CD4-positive, alpha-beta T cell (primary cell): ENCODE measurements at regions of chr19 and their contacts with region 1.

Region 1: DNA sequence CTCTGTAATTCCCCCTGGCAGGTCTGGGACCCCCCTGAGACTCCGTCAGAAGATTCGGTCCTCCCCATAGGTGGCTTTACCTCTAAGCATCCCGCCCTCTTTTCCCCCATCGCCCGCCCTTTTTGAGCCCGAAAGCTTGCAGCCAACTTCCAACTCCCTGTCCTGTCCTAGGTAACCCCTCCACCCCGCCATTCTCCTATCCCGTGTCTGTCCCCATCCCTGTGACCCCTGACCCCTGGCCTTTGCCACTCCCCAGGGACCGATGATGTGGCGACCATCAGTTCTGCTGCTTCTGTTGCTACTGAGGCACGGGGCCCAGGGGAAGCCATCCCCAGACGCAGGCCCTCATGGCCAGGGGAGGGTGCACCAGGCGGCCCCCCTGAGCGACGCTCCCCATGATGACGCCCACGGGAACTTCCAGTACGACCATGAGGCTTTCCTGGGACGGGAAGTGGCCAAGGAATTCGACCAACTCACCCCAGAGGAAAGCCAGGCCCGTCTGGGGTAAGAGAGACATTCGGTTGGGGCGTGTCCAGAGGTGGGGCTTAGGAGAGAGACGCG is 488 bp downstream of the RCN3 start:
- DNase-seq: peak in 1 of 14 experiments; percentile 13
- ATAC-seq: no peak
- H3K4me3 ChIP-seq: peak overlapping the region; percentile 54
- H3K4me3 Mint-ChIP-seq: peak overlapping the region; percentile 84
- H3K27ac ChIP-seq: no peak overlapping the region
- H3K27ac Mint-ChIP-seq: no peak overlapping the region
- H3K4me1 ChIP-seq: peaks cover 20% of the 10 kb centered on the region
- H3K4me1 Mint-ChIP-seq: peaks cover 32% of the 10 kb centered on the region
- H3K27me3 ChIP-seq: no peaks in the 10 kb centered on the region
- H3K27me3 Mint-ChIP-seq: no peaks in the 10 kb centered on the region
- CTCF ChIP-seq: no peak

Region 2: DNA sequence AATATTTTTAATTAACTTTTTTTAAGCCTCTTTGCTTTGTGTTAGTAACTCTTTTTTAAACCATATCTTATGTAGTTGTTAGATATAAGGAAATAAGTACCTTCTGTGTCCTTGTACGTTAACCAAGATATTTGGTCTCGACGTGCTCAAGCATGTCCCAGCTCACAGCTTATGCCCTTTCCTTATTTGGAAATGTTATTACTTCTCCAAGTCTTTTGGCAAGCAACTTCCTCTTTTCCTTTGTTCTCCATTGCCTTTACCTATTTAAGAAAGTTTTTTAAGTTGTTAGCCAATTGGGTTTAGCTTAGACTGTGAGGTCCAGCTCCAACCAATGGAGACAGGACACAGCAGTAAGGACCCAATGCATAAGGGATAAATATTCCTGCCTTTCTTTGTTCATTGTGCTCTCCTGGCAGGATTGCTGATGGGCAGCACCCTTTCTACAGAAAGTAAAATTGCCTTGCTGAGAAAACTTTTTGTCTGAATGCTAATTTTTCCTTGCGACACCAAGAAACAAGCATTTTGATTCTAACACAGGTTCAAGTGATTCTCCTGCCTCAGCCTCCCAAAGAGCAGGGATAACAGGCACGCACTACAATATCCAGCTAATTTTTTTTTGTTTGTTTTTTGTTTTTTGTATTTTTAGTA is 159.5 kb before region 1 on chr19:
- CTCF ChIA-PET with region 1: no interaction called
- POLR2A ChIA-PET with region 1: no interaction called
- intact Hi-C with region 1: no loop called
- DNase-seq: no peak
- ATAC-seq: no peak
- H3K4me3 ChIP-seq: no peak overlapping the region
- H3K4me3 Mint-ChIP-seq: no peak overlapping the region
- H3K27ac ChIP-seq: no peak overlapping the region
- H3K27ac Mint-ChIP-seq: no peak overlapping the region
- H3K4me1 ChIP-seq: peaks cover 8% of the 10 kb centered on the region
- H3K4me1 Mint-ChIP-seq: no peaks in the 10 kb centered on the region
- H3K27me3 ChIP-seq: peaks cover 20 to 31% of the 10 kb centered on the region in 2 experiments
- H3K27me3 Mint-ChIP-seq: peaks cover 22% of the 10 kb centered on the region
- CTCF ChIP-seq: no peak

Region 3: DNA sequence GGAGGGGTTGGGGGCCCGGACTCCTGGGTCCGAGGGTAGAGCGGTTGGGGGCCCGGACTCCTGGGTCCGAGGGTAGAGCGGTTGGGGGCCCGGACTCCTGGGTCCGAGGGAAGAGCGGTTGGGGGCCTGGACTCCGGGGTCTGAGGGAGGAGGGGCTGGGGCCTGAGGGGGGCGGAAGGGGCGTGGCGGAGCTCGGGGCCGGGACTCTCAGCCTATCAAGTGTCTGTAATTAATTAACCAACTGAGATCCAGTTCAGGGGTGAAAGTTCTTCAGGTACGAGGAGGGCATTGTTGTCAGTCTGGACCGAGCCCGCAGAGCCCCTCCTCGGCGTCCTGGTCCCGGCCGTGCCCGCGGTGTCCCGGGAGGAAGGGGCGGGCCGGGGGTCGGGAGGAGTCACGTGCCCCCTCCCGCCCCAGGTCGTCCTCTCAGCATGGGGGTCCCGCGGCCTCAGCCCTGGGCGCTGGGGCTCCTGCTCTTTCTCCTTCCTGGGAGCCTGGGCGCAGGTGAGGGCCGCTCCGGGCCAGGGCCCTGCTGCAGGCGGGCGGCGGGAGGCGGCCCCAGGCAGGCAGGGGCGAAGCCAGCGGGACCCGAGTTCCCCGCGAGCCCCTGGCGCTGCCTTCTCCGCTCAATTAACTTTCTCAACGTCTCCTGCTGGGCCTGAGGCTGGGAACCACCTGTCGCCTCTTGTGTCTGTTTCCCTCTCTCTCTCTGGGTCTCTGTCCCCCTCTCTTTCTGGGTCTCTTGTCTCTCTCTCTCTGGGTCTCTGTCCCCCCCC is 15.1 kb before region 1 on chr19:
- CTCF ChIA-PET with region 1: no interaction called
- POLR2A ChIA-PET with region 1: interaction called, 8 read pairs
- intact Hi-C with region 1: loop called in 1 of 2 experiments (anchors 2 kb)
- DNase-seq: peak in 5 of 14 experiments; percentile 27 to 63 (median 56)
- ATAC-seq: peak; percentile 68
- H3K4me3 ChIP-seq: peak overlapping the region; percentile 60
- H3K4me3 Mint-ChIP-seq: peak overlapping the region; percentile 90
- H3K27ac ChIP-seq: peak overlapping the region; percentile 46 to 62
- H3K27ac Mint-ChIP-seq: peak overlapping the region; percentile 82
- H3K4me1 ChIP-seq: peaks cover 44% of the 10 kb centered on the region
- H3K4me1 Mint-ChIP-seq: peaks cover 46% of the 10 kb centered on the region
- H3K27me3 ChIP-seq: no peaks in the 10 kb centered on the region
- H3K27me3 Mint-ChIP-seq: no peaks in the 10 kb centered on the region
- CTCF ChIP-seq: no peak

Region 4: DNA sequence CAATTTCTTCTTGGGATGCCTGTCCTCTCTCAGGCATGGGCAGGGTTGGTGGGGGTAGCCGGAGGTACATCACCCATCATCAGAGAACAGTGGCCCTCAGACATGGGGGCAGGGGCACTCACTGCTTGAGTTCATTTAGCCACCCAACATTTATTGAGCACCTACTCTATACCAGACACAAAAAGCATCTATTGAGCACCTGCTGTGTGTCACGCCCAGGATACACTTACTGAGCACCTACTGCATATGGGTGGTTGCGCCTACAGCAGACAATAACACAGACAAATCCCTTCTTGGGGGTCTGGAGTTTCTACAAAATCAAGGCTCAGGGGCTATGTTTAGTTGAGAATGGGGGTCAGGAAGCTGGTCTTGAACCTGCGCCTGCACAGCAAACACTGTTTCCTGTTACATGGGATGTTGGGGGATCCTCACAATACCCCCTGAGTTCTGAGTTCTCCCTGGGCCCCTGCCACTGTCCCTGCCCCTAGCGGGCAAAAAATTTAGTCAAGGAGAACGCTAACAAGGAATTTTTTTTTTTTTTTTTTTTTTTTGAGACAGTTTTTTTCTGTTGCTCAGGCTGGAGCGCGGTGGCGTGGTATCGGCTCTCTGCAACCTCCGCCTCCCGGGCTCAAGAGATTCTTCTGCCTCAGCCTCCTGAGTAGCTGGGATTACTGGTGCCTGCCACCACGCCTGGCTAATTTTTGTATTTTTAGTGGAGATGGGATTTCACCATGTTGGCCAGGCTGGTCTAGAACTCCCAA is 11.1 kb after region 1 on chr19:
- CTCF ChIA-PET with region 1: no interaction called
- POLR2A ChIA-PET with region 1: no interaction called
- intact Hi-C with region 1: loop called in 1 of 2 experiments (anchors 2 kb)
- DNase-seq: no peak
- ATAC-seq: no peak
- H3K4me3 ChIP-seq: no peak overlapping the region
- H3K4me3 Mint-ChIP-seq: no peak overlapping the region
- H3K27ac ChIP-seq: no peak overlapping the region
- H3K27ac Mint-ChIP-seq: no peak overlapping the region
- H3K4me1 ChIP-seq: peaks cover 24% of the 10 kb centered on the region
- H3K4me1 Mint-ChIP-seq: peaks cover 26% of the 10 kb centered on the region
- H3K27me3 ChIP-seq: no peaks in the 10 kb centered on the region
- H3K27me3 Mint-ChIP-seq: no peaks in the 10 kb centered on the region
- CTCF ChIP-seq: no peak

Region 5: GRCh38 chr19:49555600-49556411 is 27.5 kb after region 1 on chr19:
- CTCF ChIA-PET with region 1: interaction called, 5 read pairs
- POLR2A ChIA-PET with region 1: interaction called, 19 read pairs
- intact Hi-C with region 1: no loop called
- DNase-seq: peak; percentile 65 to 94 (median 84)
- ATAC-seq: peak; percentile 64
- H3K4me3 ChIP-seq: peak overlapping the region; percentile 68
- H3K4me3 Mint-ChIP-seq: peak overlapping the region; percentile 62
- H3K27ac ChIP-seq: peak overlapping the region; percentile 61 to 62
- H3K27ac Mint-ChIP-seq: peak overlapping the region; percentile 96
- H3K4me1 ChIP-seq: peaks cover 96% of the 10 kb centered on the region
- H3K4me1 Mint-ChIP-seq: peaks cover 74% of the 10 kb centered on the region
- H3K27me3 ChIP-seq: peaks cover 0 to 3% of the 10 kb centered on the region in 2 experiments
- H3K27me3 Mint-ChIP-seq: no peaks in the 10 kb centered on the region
- CTCF ChIP-seq: no peak

Region 6: DNA sequence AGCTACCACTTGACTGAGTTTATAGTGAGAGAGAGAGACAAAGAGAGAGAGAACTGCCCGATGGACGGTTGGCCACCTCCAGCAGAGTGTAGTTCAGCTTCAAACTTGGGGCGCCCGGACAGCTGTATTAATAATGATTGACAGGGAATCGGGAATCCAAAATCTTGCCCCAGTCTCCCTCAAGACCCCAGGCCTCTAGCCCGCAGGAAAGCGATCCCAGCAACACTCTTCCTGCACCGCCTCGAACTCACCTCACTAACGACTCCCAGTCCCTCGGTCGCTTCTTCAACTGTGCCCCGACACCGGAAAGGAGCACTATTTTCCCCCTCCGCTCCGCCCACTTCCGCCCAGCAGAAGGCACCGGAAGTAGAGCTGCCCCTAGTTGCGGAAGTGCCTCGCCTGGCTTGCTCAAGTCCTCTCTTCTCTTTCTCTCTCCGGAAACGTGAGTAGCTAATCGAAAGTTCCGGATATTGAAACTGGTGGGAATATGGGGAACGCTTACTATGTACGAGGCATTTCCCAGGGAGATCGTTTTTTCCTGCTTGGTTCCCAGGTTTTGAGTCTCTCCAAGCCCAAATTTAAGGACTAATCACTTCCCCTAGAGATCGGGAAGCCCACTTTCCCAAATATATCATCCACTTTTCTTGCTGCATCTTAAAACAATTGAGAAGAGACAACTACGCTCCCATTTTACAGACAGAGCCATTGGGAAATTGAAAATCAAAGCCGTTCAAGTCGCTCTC is 52.1 kb after region 1 on chr19 and contains the start of gene NOSIP:
- CTCF ChIA-PET with region 1: no interaction called
- POLR2A ChIA-PET with region 1: no interaction called
- intact Hi-C with region 1: no loop called
- DNase-seq: peak; percentile 93 to 98 (median 96)
- ATAC-seq: peak; percentile 98
- H3K4me3 ChIP-seq: peak within 1 kb of the TSS; percentile 75
- H3K4me3 Mint-ChIP-seq: peak within 1 kb of the TSS; percentile 90
- H3K27ac ChIP-seq: peak within 1 kb of the TSS in 1 of 2 donors; percentile 8
- H3K27ac Mint-ChIP-seq: peak within 1 kb of the TSS; percentile 67
- H3K4me1 ChIP-seq: peaks cover 18% of the 10 kb centered on the region
- H3K4me1 Mint-ChIP-seq: peaks cover 33% of the 10 kb centered on the region
- H3K27me3 ChIP-seq: no peaks in the 10 kb centered on the region
- H3K27me3 Mint-ChIP-seq: no peaks in the 10 kb centered on the region
- CTCF ChIP-seq: no peak
- total RNA-seq, gene NOSIP: 202 to 203 TPM

Region 7: DNA sequence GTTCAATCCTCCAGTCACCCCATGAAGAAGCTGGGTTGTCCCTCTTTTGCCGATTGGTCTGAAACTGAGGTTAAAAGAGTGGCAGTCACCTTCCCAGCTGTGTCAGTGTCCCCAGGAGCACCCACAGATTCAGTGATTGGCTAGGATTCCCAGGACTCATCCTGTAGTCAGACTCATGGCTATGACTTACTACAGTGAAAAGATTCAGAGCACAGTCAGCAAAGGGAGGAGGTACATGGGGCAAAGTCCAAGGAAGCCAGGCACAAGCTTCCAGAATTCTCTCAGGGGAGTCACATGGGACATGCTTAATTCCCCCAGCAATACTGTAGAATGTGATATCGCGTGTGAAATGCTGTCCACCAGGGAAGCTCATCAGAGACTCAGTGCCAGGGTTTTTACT is 511.7 kb after region 1 on chr19:
- CTCF ChIA-PET with region 1: no interaction called
- POLR2A ChIA-PET with region 1: no interaction called
- intact Hi-C with region 1: no loop called
- DNase-seq: no peak
- ATAC-seq: no peak
- H3K4me3 ChIP-seq: no peak overlapping the region
- H3K4me3 Mint-ChIP-seq: no peak overlapping the region
- H3K27ac ChIP-seq: no peak overlapping the region
- H3K27ac Mint-ChIP-seq: no peak overlapping the region
- H3K4me1 ChIP-seq: no peaks in the 10 kb centered on the region
- H3K4me1 Mint-ChIP-seq: no peaks in the 10 kb centered on the region
- H3K27me3 ChIP-seq: no peaks in the 10 kb centered on the region
- H3K27me3 Mint-ChIP-seq: no peaks in the 10 kb centered on the region
- CTCF ChIP-seq: no peak